A549 (cell line): ENCODE measurements at regions of chr15 and their contacts with region 1.

Region 1: GRCh38 chr15:43285609-43286037 is 18.9 kb upstream of the TGM5 start:
- DNase-seq: peak; percentile 59 to 70
- ATAC-seq: peak; percentile 82 to 88
- H3K4me3 ChIP-seq: no peak overlapping the region; the same call in 2 of the 3 replicates
- H3K27ac ChIP-seq: peak overlapping the region in 1 of 2 experiments; percentile 56; a peak in 2 of 6 replicates
- H3K4me1 ChIP-seq: no peaks in the 10 kb centered on the region
- CTCF ChIP-seq: peak; percentile 79
- EP300 ChIP-seq: no peak
- POLR2A ChIP-seq: no peak
- RAD21 ChIP-seq: peak; percentile 79 to 85

Region 2: GRCh38 chr15:43194795-43195194 is 90.8 kb before region 1 on chr15:
- CTCF ChIA-PET with region 1: interaction called, 34 read pairs
- POLR2A ChIA-PET with region 1: no interaction called
- DNase-seq: no peak
- ATAC-seq: no peak
- H3K4me3 ChIP-seq: no peak overlapping the region
- H3K27ac ChIP-seq: no peak overlapping the region
- H3K4me1 ChIP-seq: no peaks in the 10 kb centered on the region
- CTCF ChIP-seq: no peak
- EP300 ChIP-seq: no peak
- POLR2A ChIP-seq: no peak
- RAD21 ChIP-seq: no peak

Region 3: GRCh38 chr15:43215961-43216360 is 69.7 kb before region 1 on chr15:
- CTCF ChIA-PET with region 1: interaction called, 31 read pairs
- POLR2A ChIA-PET with region 1: no interaction called
- DNase-seq: peak in 1 of 2 experiments; percentile 25
- ATAC-seq: peak; percentile 40 to 60; a peak in 4 of 6 replicates
- H3K4me3 ChIP-seq: no peak overlapping the region
- H3K27ac ChIP-seq: no peak overlapping the region
- H3K4me1 ChIP-seq: no peaks in the 10 kb centered on the region
- CTCF ChIP-seq: no peak
- EP300 ChIP-seq: no peak
- POLR2A ChIP-seq: no peak
- RAD21 ChIP-seq: no peak

Region 4: GRCh38 chr15:43238671-43239131 is 46.9 kb before region 1 on chr15:
- CTCF ChIA-PET with region 1: interaction called, 11 read pairs
- POLR2A ChIA-PET with region 1: no interaction called
- DNase-seq: no peak
- ATAC-seq: no peak
- H3K4me3 ChIP-seq: no peak overlapping the region
- H3K27ac ChIP-seq: no peak overlapping the region
- H3K4me1 ChIP-seq: no peaks in the 10 kb centered on the region
- CTCF ChIP-seq: no peak
- EP300 ChIP-seq: no peak
- POLR2A ChIP-seq: no peak
- RAD21 ChIP-seq: no peak

Region 5: GRCh38 chr15:43268111-43269105 is 17.2 kb before region 1 on chr15:
- CTCF ChIA-PET with region 1: interaction called, 21 read pairs
- POLR2A ChIA-PET with region 1: no interaction called
- DNase-seq: no peak
- ATAC-seq: peak in 1 of 2 experiments; percentile 29; a peak in 1 of 6 replicates
- H3K4me3 ChIP-seq: no peak overlapping the region
- H3K27ac ChIP-seq: no peak overlapping the region
- H3K4me1 ChIP-seq: no peaks in the 10 kb centered on the region
- CTCF ChIP-seq: no peak
- EP300 ChIP-seq: no peak
- POLR2A ChIP-seq: no peak
- RAD21 ChIP-seq: no peak

Region 6: GRCh38 chr15:43325039-43325684 is 39.5 kb after region 1 on chr15:
- CTCF ChIA-PET with region 1: interaction called, 13 read pairs
- POLR2A ChIA-PET with region 1: no interaction called
- DNase-seq: no peak
- ATAC-seq: no peak
- H3K4me3 ChIP-seq: no peak overlapping the region
- H3K27ac ChIP-seq: no peak overlapping the region
- H3K4me1 ChIP-seq: peaks cover 6% of the 10 kb centered on the region; the same call in 1 of the 3 replicates
- CTCF ChIP-seq: no peak
- EP300 ChIP-seq: no peak
- POLR2A ChIP-seq: no peak
- RAD21 ChIP-seq: no peak

Region 7: GRCh38 chr15:43505738-43506137 is 220.1 kb after region 1 on chr15:
- CTCF ChIA-PET with region 1: no interaction called
- POLR2A ChIA-PET with region 1: no interaction called
- DNase-seq: no peak
- ATAC-seq: no peak
- H3K4me3 ChIP-seq: no peak overlapping the region
- H3K27ac ChIP-seq: no peak overlapping the region
- H3K4me1 ChIP-seq: peaks cover 10% of the 10 kb centered on the region
- CTCF ChIP-seq: no peak
- EP300 ChIP-seq: no peak
- POLR2A ChIP-seq: no peak
- RAD21 ChIP-seq: no peak